WTC11 (cell line): ENCODE measurements at regions of chr6 and their contacts with region 1.

Region 1: GRCh38 chr6:114108119-114109002 is 137.4 kb upstream of the HDAC2 start:
- DNase-seq: peak; percentile 89
- ATAC-seq: peak; percentile 96
- H3K4me3 Mint-ChIP-seq: no peak overlapping the region
- H3K27ac Mint-ChIP-seq: no peak overlapping the region
- H3K4me1 Mint-ChIP-seq: peaks cover 4% of the 10 kb centered on the region; the same call in 1 of the 2 replicates
- H3K27me3 Mint-ChIP-seq: no peaks in the 10 kb centered on the region
- CTCF ChIP-seq: peak; percentile 76

Region 2: GRCh38 chr6:113980937-113981554 is 127.3 kb before region 1 on chr6:
- CTCF ChIA-PET with region 1: interaction called, 11 read pairs
- POLR2A ChIA-PET with region 1: no interaction called
- DNase-seq: peak; percentile 60
- ATAC-seq: peak; percentile 100
- H3K4me3 Mint-ChIP-seq: no peak overlapping the region
- H3K27ac Mint-ChIP-seq: no peak overlapping the region
- H3K4me1 Mint-ChIP-seq: no peaks in the 10 kb centered on the region; the same call in 1 of the 2 replicates
- H3K27me3 Mint-ChIP-seq: no peaks in the 10 kb centered on the region
- CTCF ChIP-seq: peak; percentile 63

Region 3: DNA sequence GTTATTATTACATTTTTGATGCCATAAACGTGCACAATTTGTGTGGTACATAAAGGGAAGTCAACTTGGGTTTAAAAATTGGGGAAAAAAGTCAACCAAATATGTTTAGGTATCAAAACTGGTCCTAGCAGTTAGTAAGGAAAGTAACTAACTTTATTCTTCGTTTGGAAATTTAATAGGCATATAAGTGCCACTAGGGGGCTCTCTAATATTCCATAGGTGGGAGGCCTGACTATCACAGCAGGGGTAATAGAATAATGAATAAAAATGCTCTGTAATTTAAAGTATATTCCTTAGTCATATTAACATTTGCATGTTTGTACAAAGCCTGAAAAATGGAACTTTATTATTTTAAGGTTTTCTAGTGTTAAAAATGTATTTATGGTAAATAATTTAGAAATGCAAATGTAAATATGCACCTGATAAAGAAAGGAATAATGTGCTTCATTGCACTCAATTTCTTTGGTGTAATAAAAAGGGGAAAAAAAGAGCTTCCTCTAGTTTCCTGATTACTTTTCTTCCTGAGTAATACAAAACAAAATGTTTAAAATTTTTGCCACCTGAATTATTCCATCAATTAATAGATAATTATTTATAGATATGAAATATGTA is 11.7 kb before region 1 on chr6:
- CTCF ChIA-PET with region 1: interaction called, 22 read pairs
- POLR2A ChIA-PET with region 1: no interaction called
- DNase-seq: no peak
- ATAC-seq: no peak
- H3K4me3 Mint-ChIP-seq: no peak overlapping the region
- H3K27ac Mint-ChIP-seq: no peak overlapping the region
- H3K4me1 Mint-ChIP-seq: no peaks in the 10 kb centered on the region
- H3K27me3 Mint-ChIP-seq: no peaks in the 10 kb centered on the region
- CTCF ChIP-seq: peak; percentile 88

Region 4: DNA sequence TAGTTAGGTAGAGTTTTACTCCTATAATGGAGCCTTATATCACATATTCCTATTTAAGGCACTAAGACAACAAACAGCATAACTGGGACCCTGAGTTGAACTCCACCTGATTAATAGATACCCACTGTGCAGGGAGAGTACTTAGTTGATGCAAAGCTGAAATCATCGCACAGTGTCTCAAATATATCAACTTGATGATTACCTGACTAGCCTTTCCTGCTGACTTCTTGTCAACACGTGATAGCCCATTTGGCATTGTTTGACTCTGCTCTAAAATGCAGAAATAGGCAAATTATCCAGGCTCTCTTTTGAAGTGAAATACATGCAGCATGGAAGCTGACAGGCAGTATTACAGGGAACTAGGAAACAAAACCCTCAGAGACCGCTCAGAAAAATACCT is 17.2 kb after region 1 on chr6:
- CTCF ChIA-PET with region 1: interaction called, 11 read pairs
- POLR2A ChIA-PET with region 1: interaction called, 3 read pairs
- DNase-seq: no peak
- ATAC-seq: no peak
- H3K4me3 Mint-ChIP-seq: no peak overlapping the region
- H3K27ac Mint-ChIP-seq: no peak overlapping the region
- H3K4me1 Mint-ChIP-seq: peaks cover 36% of the 10 kb centered on the region
- H3K27me3 Mint-ChIP-seq: no peaks in the 10 kb centered on the region
- CTCF ChIP-seq: no peak

Region 5: DNA sequence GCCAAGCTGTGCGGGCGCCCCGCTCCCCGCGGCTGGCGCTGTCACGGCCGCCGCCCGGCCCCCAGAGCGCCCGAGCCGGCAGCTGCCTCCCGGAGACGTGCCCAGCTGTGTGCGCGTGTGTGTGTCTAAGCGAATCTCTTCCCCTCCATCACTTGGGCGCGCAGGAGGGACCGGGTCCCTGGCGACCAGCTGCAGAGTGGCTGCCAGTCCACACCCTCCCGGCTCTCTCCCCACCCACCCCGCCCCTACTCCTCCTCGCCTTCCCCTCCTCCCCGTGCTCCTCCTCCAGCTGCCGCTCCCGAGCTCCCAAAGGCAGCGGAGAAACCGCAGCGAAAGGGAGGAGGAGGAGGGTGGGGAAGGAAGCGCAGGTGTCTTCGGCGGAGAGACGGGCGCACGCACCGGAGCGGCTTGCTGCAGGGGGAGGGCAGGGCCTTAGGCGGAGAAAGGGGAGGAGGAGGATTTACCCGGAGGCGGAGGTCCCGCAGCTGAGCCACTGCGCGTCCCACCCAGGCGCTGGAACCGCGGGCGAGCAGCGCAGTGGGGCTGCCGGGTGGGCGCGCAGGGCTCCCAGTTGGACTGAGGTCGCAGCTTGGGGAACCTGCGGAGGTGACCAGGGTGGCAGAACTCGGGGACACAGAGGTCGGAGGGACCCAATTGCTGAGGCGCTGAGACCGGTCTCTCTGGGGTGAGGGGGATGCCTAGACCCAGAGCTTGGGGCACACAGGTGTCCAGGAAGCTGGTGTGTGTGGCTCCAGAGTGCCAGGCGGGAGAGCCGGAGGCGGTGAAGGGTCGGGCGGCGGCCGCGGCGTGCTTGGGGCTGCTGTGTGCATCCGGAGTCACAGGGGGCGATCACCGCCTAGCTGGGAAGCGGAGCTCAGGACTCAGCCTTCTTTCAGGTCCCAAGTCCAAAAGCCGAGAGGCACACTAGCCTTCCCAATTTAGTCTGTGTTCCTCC is 234.7 kb after region 1 on chr6 and contains the start of gene HS3ST5:
- CTCF ChIA-PET with region 1: interaction called, 19 read pairs
- POLR2A ChIA-PET with region 1: no interaction called
- DNase-seq: peak; percentile 91
- ATAC-seq: peak; percentile 79
- H3K4me3 Mint-ChIP-seq: peak within 1 kb of the TSS; percentile 98
- H3K27ac Mint-ChIP-seq: peak within 1 kb of the TSS; percentile 81
- H3K4me1 Mint-ChIP-seq: peaks cover 43% of the 10 kb centered on the region
- H3K27me3 Mint-ChIP-seq: no peaks in the 10 kb centered on the region
- CTCF ChIP-seq: peak; percentile 43
- total RNA-seq, gene HS3ST5: 8.1 to 8.7 TPM (median 8.6 TPM) in 3 replicates